ENCODE measurements at regions of chr11 and their contacts with region 1.

Region 1: GRCh38 chr11:19076744-19077589 is 16.4 kb upstream of the MRGPRX2 start:
- DNase-seq: peak in 1 of 2 donors; percentile 17
- ATAC-seq: peak; percentile 61 to 73
- H3K4me3 ChIP-seq: no peak overlapping the region
- H3K27ac ChIP-seq: no peak overlapping the region
- H3K4me1 ChIP-seq: peaks cover 0 to 4% of the 10 kb centered on the region in 2 donors
- H3K27me3 ChIP-seq: no peaks in the 10 kb centered on the region
- CTCF ChIP-seq: peak; percentile 79 to 95 (median 81)
- POLR2A ChIP-seq: no peak

Region 2: GRCh38 chr11:19110280-19110679 is 33.3 kb after region 1 on chr11:
- in situ Hi-C with region 1: no loop called
- intact Hi-C with region 1: loop called (anchors 1 kb)
- DNase-seq: peak; percentile 64 to 67
- ATAC-seq: peak; percentile 94 to 99
- H3K4me3 ChIP-seq: no peak overlapping the region
- H3K27ac ChIP-seq: peak overlapping the region in 3 of 4 donors; percentile 55 to 74 (median 69)
- H3K4me1 ChIP-seq: peaks cover 7 to 12% of the 10 kb centered on the region in 2 donors
- H3K27me3 ChIP-seq: no peaks in the 10 kb centered on the region
- CTCF ChIP-seq: no peak
- POLR2A ChIP-seq: no peak

Measured in gastrocnemius medialis (tissue), 4 donors.